Caco-2 (cell line): ENCODE measurements at regions of chr4 and their contacts with region 1.

Region 1: GRCh38 chr4:98928505-98929340 is at the start of gene EIF4E:
- DNase-seq: peak; percentile 97 to 99
- H3K4me3 ChIP-seq: peak within 1 kb of the TSS; percentile 95
- H3K4me3 Mint-ChIP-seq: peak within 1 kb of the TSS; percentile 81
- H3K27ac Mint-ChIP-seq: peak within 1 kb of the TSS; percentile 85
- H3K4me1 ChIP-seq: peaks cover 6% of the 10 kb centered on the region
- H3K4me1 Mint-ChIP-seq: peaks cover 7% of the 10 kb centered on the region
- H3K27me3 ChIP-seq: no peaks in the 10 kb centered on the region
- H3K27me3 Mint-ChIP-seq: no peaks in the 10 kb centered on the region
- CTCF ChIP-seq: peak in 1 of 2 experiments; percentile 10
- total RNA-seq, gene EIF4E: 140 and 151 TPM in 2 replicates

Region 2: DNA sequence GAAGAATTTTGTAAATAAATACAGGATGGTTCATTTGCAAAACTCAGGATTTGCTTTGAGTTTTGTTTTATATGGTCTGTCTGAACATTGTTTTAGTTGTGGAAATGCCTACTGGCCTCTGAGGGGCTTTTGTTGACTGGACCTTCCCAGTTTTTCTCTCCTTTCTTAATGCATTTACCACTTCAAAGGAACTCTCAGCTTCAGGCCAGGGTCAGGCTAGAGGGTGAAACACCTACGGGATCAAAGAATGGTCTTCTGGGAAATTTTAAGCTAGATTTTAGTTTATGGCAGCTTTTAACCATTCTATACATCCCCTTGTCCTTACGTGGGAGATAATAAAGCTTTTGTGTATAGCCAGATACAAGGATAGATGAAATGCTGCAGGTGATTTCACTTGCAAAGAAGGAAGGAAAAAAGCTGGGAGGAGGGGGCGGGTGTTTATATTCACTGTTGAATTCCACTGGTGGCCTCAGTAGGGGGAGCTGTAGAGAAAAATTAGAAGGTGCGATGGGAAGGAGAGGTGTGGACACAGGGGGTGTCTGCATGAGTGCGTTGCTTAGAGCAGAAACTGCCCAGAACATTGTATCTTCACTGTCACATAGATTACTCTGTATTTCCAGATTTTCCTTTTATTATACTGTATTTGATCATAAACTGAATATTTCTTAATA is 422.1 kb before region 1 on chr4:
- CTCF ChIA-PET with region 1: no interaction called
- POLR2A ChIA-PET with region 1: no interaction called
- intact Hi-C with region 1: no loop called
- DNase-seq: peak in 1 of 2 experiments; percentile 18
- H3K4me3 ChIP-seq: no peak overlapping the region
- H3K4me3 Mint-ChIP-seq: no peak overlapping the region
- H3K27ac Mint-ChIP-seq: no peak overlapping the region
- H3K4me1 ChIP-seq: no peaks in the 10 kb centered on the region; the same call in 1 of the 2 replicates
- H3K4me1 Mint-ChIP-seq: no peaks in the 10 kb centered on the region
- H3K27me3 ChIP-seq: no peaks in the 10 kb centered on the region
- H3K27me3 Mint-ChIP-seq: no peaks in the 10 kb centered on the region
- CTCF ChIP-seq: peak; percentile 14 to 27

Region 3: DNA sequence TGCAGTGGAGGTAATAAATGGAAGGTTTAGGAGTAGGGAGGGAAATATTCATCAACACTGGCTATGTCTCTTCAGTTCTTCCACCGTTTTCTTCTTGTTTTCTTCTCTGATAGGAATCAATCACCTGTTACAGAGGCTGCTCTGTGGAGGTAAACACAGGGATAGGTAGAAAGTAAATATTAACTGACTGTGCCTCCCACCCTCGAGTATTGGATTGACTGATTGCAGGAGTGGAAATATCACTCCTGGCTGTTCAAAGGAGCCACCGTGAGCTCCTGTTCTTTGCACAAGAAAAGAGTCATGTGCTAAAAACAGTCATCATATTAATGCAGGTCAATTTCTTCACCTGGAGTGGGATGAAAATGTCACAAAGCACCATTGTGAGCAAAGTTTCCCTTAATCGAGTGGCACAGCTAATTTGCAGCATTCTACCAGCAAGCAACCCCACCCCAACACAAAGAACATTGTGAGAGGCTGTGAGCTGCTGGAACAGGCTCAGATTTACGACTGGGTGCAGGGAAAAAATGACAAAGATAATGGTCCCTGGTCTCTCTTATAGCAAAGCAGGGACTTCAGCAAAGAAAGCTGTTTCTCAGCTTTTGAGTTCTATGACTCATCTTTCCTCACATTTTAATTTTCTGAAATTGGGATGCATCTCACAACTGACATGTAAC is 156.6 kb before region 1 on chr4:
- CTCF ChIA-PET with region 1: no interaction called
- POLR2A ChIA-PET with region 1: no interaction called
- intact Hi-C with region 1: no loop called
- DNase-seq: peak in 1 of 2 experiments; percentile 25
- H3K4me3 ChIP-seq: no peak overlapping the region
- H3K4me3 Mint-ChIP-seq: peak overlapping the region; percentile 57
- H3K27ac Mint-ChIP-seq: peak overlapping the region; percentile 81
- H3K4me1 ChIP-seq: peaks cover 12% of the 10 kb centered on the region
- H3K4me1 Mint-ChIP-seq: peaks cover 24% of the 10 kb centered on the region
- H3K27me3 ChIP-seq: no peaks in the 10 kb centered on the region
- H3K27me3 Mint-ChIP-seq: no peaks in the 10 kb centered on the region
- CTCF ChIP-seq: no peak

Region 4: DNA sequence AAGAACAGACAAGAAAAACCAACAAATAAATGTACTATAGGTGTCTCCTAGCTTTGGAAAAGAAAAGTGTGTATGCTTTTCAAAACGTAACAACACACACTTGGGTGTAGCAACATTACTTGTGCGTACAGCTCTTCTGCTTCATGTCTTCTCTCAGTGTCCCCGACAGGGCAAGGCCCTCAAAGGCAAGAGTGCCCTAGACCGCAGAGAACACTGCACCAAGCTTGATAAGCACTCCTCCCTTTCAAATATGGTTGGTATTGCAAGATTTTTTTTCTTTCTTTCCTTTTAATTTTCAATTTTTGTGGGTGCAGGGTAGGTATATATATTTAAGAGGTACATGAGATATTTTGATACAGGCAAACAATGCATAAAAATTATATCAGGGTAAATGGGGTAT is 106.6 kb before region 1 on chr4:
- CTCF ChIA-PET with region 1: no interaction called
- POLR2A ChIA-PET with region 1: interaction called, 4 read pairs
- intact Hi-C with region 1: loop called (anchors 2 kb)
- DNase-seq: no peak
- H3K4me3 ChIP-seq: no peak overlapping the region
- H3K4me3 Mint-ChIP-seq: no peak overlapping the region
- H3K27ac Mint-ChIP-seq: no peak overlapping the region
- H3K4me1 ChIP-seq: peaks cover 34% of the 10 kb centered on the region
- H3K4me1 Mint-ChIP-seq: peaks cover 34% of the 10 kb centered on the region
- H3K27me3 ChIP-seq: no peaks in the 10 kb centered on the region
- H3K27me3 Mint-ChIP-seq: no peaks in the 10 kb centered on the region
- CTCF ChIP-seq: no peak

Region 5: DNA sequence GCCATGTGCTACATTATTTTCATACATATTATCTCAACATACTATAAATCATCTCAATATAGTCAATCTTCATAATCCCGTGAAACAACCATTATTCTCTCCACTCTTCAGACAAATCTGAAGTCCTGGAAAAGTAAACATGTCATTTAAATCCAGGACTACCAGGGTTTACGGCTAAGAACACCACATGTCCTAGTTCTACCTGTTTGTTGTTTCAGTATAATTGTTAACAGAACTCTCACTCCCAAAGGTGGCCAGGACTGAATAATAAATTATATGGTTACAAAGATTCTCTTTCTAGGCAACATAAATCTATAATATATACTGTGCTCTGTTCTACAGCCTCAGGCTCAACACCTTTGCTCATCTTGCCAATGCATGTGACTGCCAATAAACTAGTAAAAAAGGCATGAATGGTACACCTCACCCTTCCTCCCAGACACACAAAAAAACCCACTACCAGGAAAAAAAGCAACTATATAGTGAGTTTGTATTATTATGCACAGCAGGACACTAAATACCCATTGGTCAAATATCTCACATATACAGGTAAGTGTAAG is 19.9 kb before region 1 on chr4:
- CTCF ChIA-PET with region 1: no interaction called
- POLR2A ChIA-PET with region 1: interaction called, 20 read pairs
- intact Hi-C with region 1: no loop called
- DNase-seq: no peak
- H3K4me3 ChIP-seq: no peak overlapping the region
- H3K4me3 Mint-ChIP-seq: no peak overlapping the region
- H3K27ac Mint-ChIP-seq: no peak overlapping the region
- H3K4me1 ChIP-seq: peaks cover 16% of the 10 kb centered on the region; the same call in 1 of the 2 replicates
- H3K4me1 Mint-ChIP-seq: peaks cover 27% of the 10 kb centered on the region
- H3K27me3 ChIP-seq: no peaks in the 10 kb centered on the region
- H3K27me3 Mint-ChIP-seq: no peaks in the 10 kb centered on the region
- CTCF ChIP-seq: no peak

Region 6: DNA sequence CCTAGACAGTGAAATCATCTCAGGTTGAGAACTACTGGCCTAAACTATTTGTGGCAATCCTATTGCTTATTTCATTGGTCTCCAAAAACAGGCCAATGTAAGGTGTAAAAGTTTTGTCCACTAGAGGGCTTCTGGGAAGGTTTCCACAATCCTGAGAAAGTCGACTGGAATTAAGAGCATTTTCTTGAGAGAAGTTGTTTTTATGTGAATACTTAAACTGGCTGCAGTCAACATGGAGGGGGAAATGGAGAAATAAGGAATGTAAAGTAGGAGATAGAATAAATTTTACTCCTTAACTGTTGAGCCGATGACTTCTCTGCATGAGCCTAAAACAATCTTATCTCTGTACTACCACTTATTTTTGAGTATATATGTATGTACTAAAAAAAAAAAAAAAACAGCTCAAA is 11.2 kb after region 1 on chr4:
- CTCF ChIA-PET with region 1: no interaction called
- POLR2A ChIA-PET with region 1: interaction called, 11 read pairs
- intact Hi-C with region 1: no loop called
- DNase-seq: peak in 1 of 2 experiments; percentile 59
- H3K4me3 ChIP-seq: no peak overlapping the region
- H3K4me3 Mint-ChIP-seq: no peak overlapping the region
- H3K27ac Mint-ChIP-seq: no peak overlapping the region
- H3K4me1 ChIP-seq: peaks cover 28% of the 10 kb centered on the region
- H3K4me1 Mint-ChIP-seq: peaks cover 27% of the 10 kb centered on the region
- H3K27me3 ChIP-seq: no peaks in the 10 kb centered on the region
- H3K27me3 Mint-ChIP-seq: no peaks in the 10 kb centered on the region
- CTCF ChIP-seq: peak; percentile 61 to 75

Region 7: DNA sequence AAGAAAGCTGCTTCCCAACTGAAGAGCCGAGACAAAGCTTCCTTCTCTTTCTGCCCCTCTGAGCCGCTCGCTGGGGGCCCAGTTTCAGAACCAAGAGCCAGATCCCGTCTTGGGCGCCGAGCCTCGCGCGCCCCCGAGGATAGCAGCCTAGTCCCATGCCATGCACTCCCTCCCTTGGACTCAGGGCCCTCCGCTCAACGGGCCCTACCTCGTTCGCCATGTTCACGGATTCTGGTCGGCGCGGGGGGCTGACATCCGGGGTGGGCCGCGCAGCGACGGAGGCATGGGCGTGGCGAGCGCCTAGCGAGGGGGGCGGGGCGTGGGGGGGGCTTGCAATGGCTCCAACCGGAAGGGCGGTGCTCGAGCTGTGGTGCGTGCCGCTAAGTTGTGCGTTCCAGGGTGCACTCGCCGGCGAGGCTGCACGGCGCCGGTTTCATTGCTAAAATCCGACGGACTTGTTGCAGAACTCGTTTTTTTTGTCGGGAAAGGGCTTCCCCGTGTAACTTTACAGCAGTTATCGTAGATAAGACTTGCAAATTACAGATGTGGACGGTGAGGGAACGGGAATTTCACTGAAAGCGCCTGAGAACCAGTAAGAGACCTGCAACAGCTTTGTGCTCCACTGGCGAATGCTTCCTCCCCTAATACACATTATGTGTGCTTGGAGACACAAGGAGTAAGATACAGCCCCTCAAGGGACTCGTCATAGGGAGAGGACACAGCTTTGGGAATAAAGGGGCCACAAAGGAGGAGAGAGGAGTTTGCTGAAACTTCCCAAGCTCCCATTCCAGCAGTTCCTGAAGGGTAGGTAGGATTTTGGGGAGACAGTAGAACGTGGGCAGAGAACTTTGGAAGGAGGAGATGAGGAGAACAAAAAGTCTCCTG is 160.0 kb after region 1 on chr4 and contains the start of gene ADH5:
- CTCF ChIA-PET with region 1: no interaction called
- POLR2A ChIA-PET with region 1: interaction called, 27 read pairs
- intact Hi-C with region 1: no loop called
- DNase-seq: peak; percentile 80 to 85
- H3K4me3 ChIP-seq: peak within 1 kb of the TSS; percentile 83
- H3K4me3 Mint-ChIP-seq: peak within 1 kb of the TSS; percentile 98
- H3K27ac Mint-ChIP-seq: peak within 1 kb of the TSS; percentile 98
- H3K4me1 ChIP-seq: peaks cover 13% of the 10 kb centered on the region
- H3K4me1 Mint-ChIP-seq: peaks cover 29% of the 10 kb centered on the region
- H3K27me3 ChIP-seq: no peaks in the 10 kb centered on the region
- H3K27me3 Mint-ChIP-seq: no peaks in the 10 kb centered on the region
- CTCF ChIP-seq: no peak
- total RNA-seq, gene ADH5: 144 and 161 TPM in 2 replicates

Region 8: GRCh38 chr4:99998062-99998867 is 1069.5 kb after region 1 on chr4:
- CTCF ChIA-PET with region 1: no interaction called
- POLR2A ChIA-PET with region 1: no interaction called
- intact Hi-C with region 1: no loop called
- DNase-seq: peak in 1 of 2 experiments; percentile 5
- H3K4me3 ChIP-seq: no peak overlapping the region
- H3K4me3 Mint-ChIP-seq: no peak overlapping the region
- H3K27ac Mint-ChIP-seq: no peak overlapping the region
- H3K4me1 ChIP-seq: no peaks in the 10 kb centered on the region
- H3K4me1 Mint-ChIP-seq: no peaks in the 10 kb centered on the region
- H3K27me3 ChIP-seq: no peaks in the 10 kb centered on the region
- H3K27me3 Mint-ChIP-seq: peaks cover 3% of the 10 kb centered on the region
- CTCF ChIP-seq: no peak